ENCODE measurements at regions of chr3 and their contacts with region 1.

Region 1: GRCh38 chr3:15629860-15630597 is 28.5 kb downstream of the BTD start:
- DNase-seq: peak in 3 of 5 donors; percentile 42 to 72 (median 55)
- H3K4me3 ChIP-seq: no peak overlapping the region
- H3K27ac ChIP-seq: peak overlapping the region in 1 of 2 donors; percentile 51
- H3K4me1 ChIP-seq: peaks cover 5% of the 10 kb centered on the region
- H3K27me3 ChIP-seq: no peaks in the 10 kb centered on the region
- CTCF ChIP-seq: peak; percentile 55 to 79 (median 76)
- EP300 ChIP-seq: no peak
- POLR2A ChIP-seq: no peak

Region 2: GRCh38 chr3:15797642-15798303 is 167.7 kb after region 1 on chr3 and contains the start of gene ANKRD28:
- intact Hi-C with region 1: loop called in 2 of 4 experiments (anchors 10 kb)
- DNase-seq: no peak
- H3K4me3 ChIP-seq: peak within 1 kb of the TSS; percentile 38
- H3K27ac ChIP-seq: peak within 1 kb of the TSS; percentile 24 to 55
- H3K4me1 ChIP-seq: peaks cover 4% of the 10 kb centered on the region
- H3K27me3 ChIP-seq: no peaks in the 10 kb centered on the region
- CTCF ChIP-seq: peak in 2 of 3 donors; percentile 19 to 33
- EP300 ChIP-seq: no peak
- POLR2A ChIP-seq: no peak
- total RNA-seq, gene ANKRD28: 39.2 to 79.4 (median 44.7) TPM

Region 3: DNA sequence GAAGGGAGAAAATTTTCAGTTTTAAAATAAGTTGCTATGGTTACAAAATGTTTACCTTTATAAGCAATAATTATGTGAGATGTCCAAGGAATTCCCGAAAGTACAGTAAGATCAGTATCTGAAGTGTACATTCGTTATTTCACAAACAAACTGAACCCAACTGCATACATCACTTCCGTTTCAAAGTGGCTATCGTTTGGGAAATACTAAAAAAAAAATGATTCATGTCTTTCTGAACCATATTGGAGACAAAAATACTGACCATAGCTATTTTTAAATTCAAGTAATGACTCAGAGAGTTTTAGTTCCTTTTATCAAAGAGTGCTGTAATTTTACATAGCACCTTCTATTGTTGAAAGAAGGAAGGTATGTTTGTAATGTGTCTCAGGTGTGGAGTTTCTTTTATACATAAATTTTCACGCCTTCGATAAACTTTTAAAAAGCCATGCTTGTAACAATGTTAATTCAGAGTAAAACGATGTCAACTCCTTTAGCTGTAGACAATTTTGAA is 175.8 kb after region 1 on chr3:
- intact Hi-C with region 1: loop called in 3 of 4 experiments (anchors 5 to 10 kb)
- DNase-seq: no peak
- H3K4me3 ChIP-seq: no peak overlapping the region
- H3K27ac ChIP-seq: no peak overlapping the region
- H3K4me1 ChIP-seq: peaks cover 1% of the 10 kb centered on the region
- H3K27me3 ChIP-seq: no peaks in the 10 kb centered on the region
- CTCF ChIP-seq: no peak
- EP300 ChIP-seq: no peak
- POLR2A ChIP-seq: no peak

Region 4: GRCh38 chr3:16247276-16248061 is 617.4 kb after region 1 on chr3:
- intact Hi-C with region 1: loop called in 3 of 4 experiments (anchors 5 to 10 kb)
- DNase-seq: peak; percentile 80 to 89 (median 81)
- H3K4me3 ChIP-seq: no peak overlapping the region
- H3K27ac ChIP-seq: no peak overlapping the region
- H3K4me1 ChIP-seq: peaks cover 8% of the 10 kb centered on the region
- H3K27me3 ChIP-seq: no peaks in the 10 kb centered on the region
- CTCF ChIP-seq: peak; percentile 89 to 93 (median 91)
- EP300 ChIP-seq: no peak
- POLR2A ChIP-seq: no peak

Measured in ovary (tissue), 10 donors.